Ovary (tissue), 10 donors: ENCODE measurements at regions of chr19 and their contacts with region 1.

Region 1: GRCh38 chr19:27770095-27770494 is 1442.9 kb downstream of the UQCRFS1 start:
- DNase-seq: no peak
- H3K4me3 ChIP-seq: no peak overlapping the region
- H3K27ac ChIP-seq: no peak overlapping the region
- H3K4me1 ChIP-seq: no peaks in the 10 kb centered on the region
- H3K27me3 ChIP-seq: no peaks in the 10 kb centered on the region
- CTCF ChIP-seq: no peak
- EP300 ChIP-seq: no peak
- POLR2A ChIP-seq: no peak

Region 2: GRCh38 chr19:27780367-27781075 is 10.4 kb after region 1 on chr19:
- intact Hi-C with region 1: loop called in 1 of 4 experiments (anchors 1 kb)
- DNase-seq: no peak
- H3K4me3 ChIP-seq: no peak overlapping the region
- H3K27ac ChIP-seq: no peak overlapping the region
- H3K4me1 ChIP-seq: no peaks in the 10 kb centered on the region
- H3K27me3 ChIP-seq: no peaks in the 10 kb centered on the region
- CTCF ChIP-seq: no peak
- EP300 ChIP-seq: no peak
- POLR2A ChIP-seq: no peak

Region 3: DNA sequence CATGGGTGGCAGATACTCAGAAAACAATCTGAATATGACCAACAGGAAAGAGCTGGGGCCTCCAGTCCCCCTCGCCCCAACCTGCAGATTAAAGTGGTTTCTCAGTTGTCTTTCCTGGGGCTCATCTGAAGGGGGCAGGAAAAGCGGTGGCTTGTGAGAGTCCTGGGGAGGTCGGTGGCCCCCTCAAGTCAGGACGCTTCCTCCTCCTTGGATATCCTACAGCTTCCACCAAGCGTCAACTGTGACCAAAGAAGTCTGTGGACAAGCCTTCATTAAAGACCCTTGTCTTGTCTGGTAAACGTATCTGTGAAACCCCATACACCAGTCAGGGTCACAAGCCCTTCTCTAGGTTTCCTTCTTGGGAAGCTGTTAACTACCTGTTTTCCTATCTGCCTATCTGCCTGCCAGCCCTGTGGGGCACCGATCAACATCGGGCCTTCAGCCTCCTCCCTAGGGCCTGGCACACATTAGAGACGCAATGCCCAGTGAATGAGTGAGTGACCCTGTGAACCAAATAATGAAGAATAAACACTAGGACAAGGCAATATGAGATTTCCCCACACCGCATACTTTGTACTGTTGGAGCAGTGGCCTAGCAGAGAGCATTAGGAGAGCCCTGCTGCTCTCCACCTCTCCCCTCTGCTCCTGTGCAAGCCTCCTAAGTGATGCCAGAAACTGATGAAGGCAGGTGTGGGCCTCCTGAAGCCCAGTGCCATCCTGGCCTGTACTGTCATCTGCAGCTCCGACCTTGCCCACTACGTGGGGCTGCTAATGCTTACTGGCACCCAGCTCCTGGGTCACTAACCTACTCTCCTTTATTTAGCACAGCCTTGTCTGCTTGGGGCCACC is 125.0 kb after region 1 on chr19:
- intact Hi-C with region 1: no loop called
- DNase-seq: no peak
- H3K4me3 ChIP-seq: no peak overlapping the region
- H3K27ac ChIP-seq: no peak overlapping the region
- H3K4me1 ChIP-seq: no peaks in the 10 kb centered on the region
- H3K27me3 ChIP-seq: no peaks in the 10 kb centered on the region
- CTCF ChIP-seq: no peak
- EP300 ChIP-seq: no peak
- POLR2A ChIP-seq: no peak